Activated T-helper 1 cell treated with anti-CD3 and anti-CD28 coated beads, Interleukin-12 subunit alpha, Interleukin-12 subunit beta, Interleukin-2, Interleukin-4 antibody, amounts not matched to agents 30 ng/mL and 10 ng/mL and 1 ng/mL, durations not matched to agents 14 hours and 24 hours and 36 hours (primary cell): ENCODE measurements at regions of chr10 and their contacts with region 1.

Region 1: GRCh38 chr10:16777473-16778370 is 39.5 kb downstream of the RSU1 start:
- DNase-seq: no peak
- H3K4me3 Mint-ChIP-seq: no peak overlapping the region
- H3K27ac Mint-ChIP-seq: peak overlapping the region; percentile 62
- H3K4me1 Mint-ChIP-seq: peaks cover 24% of the 10 kb centered on the region
- H3K27me3 Mint-ChIP-seq: no peaks in the 10 kb centered on the region

Region 2: DNA sequence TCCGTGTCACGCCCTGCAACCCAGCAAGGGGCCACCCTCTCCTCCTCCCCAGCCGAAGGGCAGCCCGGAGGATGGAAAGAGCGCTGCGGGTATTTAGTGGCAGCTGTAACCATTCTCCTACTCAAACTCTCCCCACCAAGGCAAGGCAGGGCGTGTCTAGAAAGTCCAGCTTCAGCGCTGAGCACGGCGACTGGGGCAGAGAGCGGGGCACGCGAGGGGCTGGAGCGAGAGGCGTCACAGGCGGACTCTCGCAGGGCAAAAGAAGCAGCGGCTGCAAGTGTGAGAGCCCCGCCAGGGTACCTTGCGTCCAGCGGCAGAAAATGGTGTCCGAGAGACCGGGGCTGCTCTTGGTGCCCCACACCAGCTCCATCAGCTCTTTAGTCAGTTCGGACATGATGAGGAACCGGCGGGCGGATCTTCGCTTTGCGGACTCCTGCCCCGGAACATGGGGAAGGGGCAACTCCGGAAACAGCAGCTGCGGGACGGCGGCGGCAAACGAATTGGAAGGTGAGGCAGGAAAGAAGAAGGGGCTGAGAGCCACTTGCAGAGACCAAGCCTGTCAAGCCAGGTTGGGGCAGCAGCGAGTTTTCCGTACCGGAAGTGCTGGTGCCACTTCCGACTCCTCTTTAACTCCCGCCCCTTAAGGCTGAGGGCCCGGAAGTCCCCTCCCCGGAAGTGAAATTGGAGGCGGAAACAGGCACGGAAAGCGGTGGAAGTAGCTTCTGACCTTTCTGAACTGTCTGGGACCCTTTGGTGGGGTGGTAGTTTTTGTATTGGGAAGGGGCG is 917.6 kb before region 1 on chr10 and contains the start of gene MINDY3:
- intact Hi-C with region 1: loop called (anchors 1 kb)
- DNase-seq: peak; percentile 66
- H3K4me3 Mint-ChIP-seq: peak within 1 kb of the TSS; percentile 99
- H3K27ac Mint-ChIP-seq: peak within 1 kb of the TSS; percentile 93
- H3K4me1 Mint-ChIP-seq: peaks cover 36% of the 10 kb centered on the region
- H3K27me3 Mint-ChIP-seq: peaks cover 19% of the 10 kb centered on the region
- total RNA-seq, gene MINDY3: 14.5 and 16.2 TPM in 2 replicates

Region 3: GRCh38 chr10:16116404-16117304 is 661.1 kb before region 1 on chr10:
- intact Hi-C with region 1: loop called (anchors 1 kb)
- DNase-seq: no peak
- H3K4me3 Mint-ChIP-seq: no peak overlapping the region
- H3K27ac Mint-ChIP-seq: no peak overlapping the region
- H3K4me1 Mint-ChIP-seq: no peaks in the 10 kb centered on the region
- H3K27me3 Mint-ChIP-seq: no peaks in the 10 kb centered on the region

Region 4: DNA sequence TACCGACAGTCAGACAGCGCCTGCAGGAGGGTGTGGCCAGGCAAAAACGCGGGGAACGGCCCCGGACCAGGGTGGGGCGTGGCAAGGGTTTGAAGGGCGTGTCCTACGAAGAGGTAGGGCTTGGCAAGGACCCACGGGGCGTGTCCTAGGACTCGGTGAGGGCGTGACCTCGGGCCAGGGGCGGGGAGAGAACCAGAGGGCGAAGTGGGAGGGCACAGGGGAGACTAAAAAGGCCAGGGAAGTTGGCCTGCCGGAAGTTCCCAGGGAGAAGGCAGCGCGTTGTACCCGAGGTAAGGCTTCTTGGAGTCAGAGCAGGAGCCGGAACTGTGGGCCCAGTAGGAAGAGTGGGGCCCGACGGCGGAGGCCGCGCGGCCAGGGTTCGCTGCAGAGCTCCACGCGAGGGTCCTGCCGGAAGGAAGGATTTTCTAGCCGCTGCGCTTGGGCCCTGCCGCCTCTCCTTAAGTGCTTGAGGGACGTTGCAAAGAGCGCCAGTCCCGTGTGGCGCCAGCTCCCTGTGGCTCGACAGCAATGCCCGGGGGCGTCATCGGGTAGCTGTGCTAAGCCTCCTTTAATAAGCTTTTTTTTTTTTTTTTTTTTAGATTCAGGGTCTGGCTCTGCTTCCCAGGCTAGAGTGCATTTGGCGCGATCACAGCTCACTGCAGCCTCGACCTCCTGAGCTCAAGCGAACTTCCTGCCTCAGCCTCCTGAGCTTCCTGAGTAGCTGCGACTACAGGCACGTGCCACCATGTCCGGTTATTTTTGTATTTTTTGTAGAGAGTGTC is 340.8 kb before region 1 on chr10 and contains the start of gene PTER:
- intact Hi-C with region 1: loop called (anchors 1 kb)
- DNase-seq: peak; percentile 98
- H3K4me3 Mint-ChIP-seq: peak within 1 kb of the TSS; percentile 88
- H3K27ac Mint-ChIP-seq: peak within 1 kb of the TSS; percentile 88
- H3K4me1 Mint-ChIP-seq: peaks cover 40% of the 10 kb centered on the region
- H3K27me3 Mint-ChIP-seq: peaks cover 9% of the 10 kb centered on the region
- total RNA-seq, gene PTER: 10.7 and 12.6 TPM in 2 replicates

Region 5: DNA sequence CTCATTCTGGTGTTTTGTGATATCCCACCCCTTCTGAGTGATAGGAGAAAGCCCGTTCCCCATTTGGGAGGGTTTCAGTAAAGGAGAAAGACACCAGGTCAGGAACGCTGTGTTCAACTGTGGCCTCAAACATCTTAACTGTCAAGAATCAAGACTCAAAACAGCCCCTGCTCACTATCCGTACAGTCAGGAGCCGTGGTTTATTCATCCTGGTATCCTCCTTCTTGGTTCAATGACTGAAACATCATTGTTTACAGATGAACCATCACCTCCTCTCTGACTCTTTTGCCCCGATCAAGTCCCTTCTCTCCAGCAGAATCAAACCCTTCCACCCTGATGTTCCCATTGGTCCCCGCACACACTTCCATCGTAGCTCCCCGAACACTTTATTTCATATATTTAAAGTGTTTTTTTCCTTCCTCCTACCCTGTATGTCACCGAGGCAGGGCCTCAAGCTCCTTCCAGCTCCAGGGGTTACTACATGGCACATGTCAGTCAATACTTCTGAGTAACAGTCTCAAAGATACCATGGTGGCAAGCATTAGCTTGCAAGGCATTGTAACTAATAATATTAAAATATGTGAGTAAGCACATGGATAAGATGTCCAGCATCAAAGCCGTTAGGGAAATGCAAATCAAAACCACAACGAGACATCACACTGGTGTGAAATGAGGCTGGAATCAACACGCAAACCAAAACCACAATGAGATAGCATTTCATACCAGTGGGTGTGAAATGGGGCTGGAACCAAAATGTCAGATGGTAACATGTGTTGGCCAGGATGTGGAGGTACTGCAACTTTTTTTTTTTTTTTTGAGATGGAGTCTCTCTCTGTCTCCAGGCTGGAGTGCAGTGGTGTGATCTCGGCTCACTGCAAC is 131.3 kb before region 1 on chr10:
- intact Hi-C with region 1: loop called (anchors 5 kb)
- DNase-seq: no peak
- H3K4me3 Mint-ChIP-seq: no peak overlapping the region
- H3K27ac Mint-ChIP-seq: peak overlapping the region; percentile 49
- H3K4me1 Mint-ChIP-seq: peaks cover 16% of the 10 kb centered on the region
- H3K27me3 Mint-ChIP-seq: no peaks in the 10 kb centered on the region

Region 6: GRCh38 chr10:16809074-16809718 is 31.5 kb after region 1 on chr10:
- intact Hi-C with region 1: loop called (anchors 1 kb)
- DNase-seq: no peak
- H3K4me3 Mint-ChIP-seq: no peak overlapping the region
- H3K27ac Mint-ChIP-seq: no peak overlapping the region
- H3K4me1 Mint-ChIP-seq: peaks cover 13% of the 10 kb centered on the region
- H3K27me3 Mint-ChIP-seq: no peaks in the 10 kb centered on the region